Activated CD8-positive, alpha-beta T cell treated with anti-CD3 and anti-CD28 coated beads for 36 hours (primary cell): ENCODE measurements at regions of chr4 and their contacts with region 1.

Region 1: DNA sequence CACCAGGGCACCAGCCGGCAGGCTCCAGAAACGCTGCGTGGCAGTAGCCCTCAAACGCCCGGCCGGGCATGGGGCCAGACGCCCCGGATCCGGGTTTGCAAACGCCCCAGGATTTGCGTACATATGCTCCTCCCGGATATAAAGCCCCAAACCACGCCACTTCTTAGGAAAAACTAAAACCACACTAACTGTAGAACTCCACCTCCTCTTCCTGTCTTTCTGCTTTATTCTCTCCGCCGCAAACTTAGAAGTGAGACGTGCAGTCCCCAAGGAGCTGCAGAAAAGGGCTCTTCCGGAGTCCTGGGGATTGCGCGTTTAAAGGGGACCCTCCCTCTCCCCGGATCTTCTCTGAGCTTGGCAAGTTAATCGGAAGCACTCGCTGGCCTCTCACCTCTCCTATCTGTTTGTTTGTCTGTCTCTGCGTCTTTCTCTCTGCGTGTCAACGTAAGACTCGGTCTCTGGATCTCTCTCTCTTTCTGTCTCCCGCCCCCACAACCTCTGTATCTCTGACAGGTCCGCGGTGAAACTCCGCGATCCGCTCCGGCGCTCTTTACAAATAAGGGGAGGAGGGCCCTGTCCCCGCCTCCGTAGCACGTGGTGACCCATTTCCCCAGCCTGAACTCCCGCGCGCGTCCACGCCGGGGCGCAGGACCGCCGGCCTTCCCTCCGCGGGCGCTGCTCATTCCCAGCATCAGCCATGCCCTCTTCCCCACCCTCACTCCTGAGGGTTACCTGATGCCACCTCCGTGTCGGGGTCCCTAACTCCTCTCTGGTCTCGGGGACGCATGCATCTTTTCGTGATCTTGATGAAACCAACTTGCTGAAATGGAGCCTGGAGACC is at the start of gene SLC39A8:
- DNase-seq: peak; percentile 96
- ATAC-seq: peak; percentile 83
- H3K4me3 Mint-ChIP-seq: peak within 1 kb of the TSS; percentile 81
- H3K27ac Mint-ChIP-seq: peak within 1 kb of the TSS; percentile 97
- H3K4me1 Mint-ChIP-seq: peaks cover 42% of the 10 kb centered on the region
- H3K27me3 Mint-ChIP-seq: no peaks in the 10 kb centered on the region
- CTCF ChIP-seq: peak; percentile 97
- total RNA-seq, gene SLC39A8: 60.2 to 61.6 TPM

Region 2: GRCh38 chr4:102169345-102169744 is 175.8 kb before region 1 on chr4:
- CTCF ChIA-PET with region 1: no interaction called
- POLR2A ChIA-PET with region 1: no interaction called
- intact Hi-C with region 1: no loop called
- DNase-seq: no peak
- ATAC-seq: no peak
- H3K4me3 Mint-ChIP-seq: no peak overlapping the region
- H3K27ac Mint-ChIP-seq: no peak overlapping the region
- H3K4me1 Mint-ChIP-seq: no peaks in the 10 kb centered on the region
- H3K27me3 Mint-ChIP-seq: no peaks in the 10 kb centered on the region
- CTCF ChIP-seq: no peak

Region 3: GRCh38 chr4:102390438-102390837 is 45.3 kb after region 1 on chr4:
- CTCF ChIA-PET with region 1: interaction called, 7 read pairs
- POLR2A ChIA-PET with region 1: no interaction called
- intact Hi-C with region 1: loop called (anchors 1 kb)
- DNase-seq: peak; percentile 9
- ATAC-seq: peak; percentile 97
- H3K4me3 Mint-ChIP-seq: no peak overlapping the region
- H3K27ac Mint-ChIP-seq: peak overlapping the region; percentile 79
- H3K4me1 Mint-ChIP-seq: peaks cover 28% of the 10 kb centered on the region
- H3K27me3 Mint-ChIP-seq: peaks cover 13% of the 10 kb centered on the region
- CTCF ChIP-seq: no peak

Region 4: GRCh38 chr4:102430461-102430910 is 85.3 kb after region 1 on chr4:
- CTCF ChIA-PET with region 1: interaction called, 13 read pairs
- POLR2A ChIA-PET with region 1: interaction called, 12 read pairs
- intact Hi-C with region 1: loop called (anchors 2 kb)
- DNase-seq: no peak
- ATAC-seq: no peak
- H3K4me3 Mint-ChIP-seq: peak overlapping the region; percentile 84
- H3K27ac Mint-ChIP-seq: peak overlapping the region; percentile 88
- H3K4me1 Mint-ChIP-seq: peaks cover 11% of the 10 kb centered on the region
- H3K27me3 Mint-ChIP-seq: no peaks in the 10 kb centered on the region
- CTCF ChIP-seq: no peak

Region 5: GRCh38 chr4:103075901-103076739 is 730.9 kb after region 1 on chr4:
- CTCF ChIA-PET with region 1: no interaction called
- POLR2A ChIA-PET with region 1: interaction called, 4 read pairs
- intact Hi-C with region 1: loop called (anchors 10 kb)
- DNase-seq: peak; percentile 74
- ATAC-seq: peak; percentile 66
- H3K4me3 Mint-ChIP-seq: peak overlapping the region; percentile 91
- H3K27ac Mint-ChIP-seq: peak overlapping the region; percentile 99
- H3K4me1 Mint-ChIP-seq: peaks cover 42% of the 10 kb centered on the region
- H3K27me3 Mint-ChIP-seq: no peaks in the 10 kb centered on the region
- CTCF ChIP-seq: no peak